ENCODE measurements at regions of chr3 and their contacts with region 1.

Region 1: DNA sequence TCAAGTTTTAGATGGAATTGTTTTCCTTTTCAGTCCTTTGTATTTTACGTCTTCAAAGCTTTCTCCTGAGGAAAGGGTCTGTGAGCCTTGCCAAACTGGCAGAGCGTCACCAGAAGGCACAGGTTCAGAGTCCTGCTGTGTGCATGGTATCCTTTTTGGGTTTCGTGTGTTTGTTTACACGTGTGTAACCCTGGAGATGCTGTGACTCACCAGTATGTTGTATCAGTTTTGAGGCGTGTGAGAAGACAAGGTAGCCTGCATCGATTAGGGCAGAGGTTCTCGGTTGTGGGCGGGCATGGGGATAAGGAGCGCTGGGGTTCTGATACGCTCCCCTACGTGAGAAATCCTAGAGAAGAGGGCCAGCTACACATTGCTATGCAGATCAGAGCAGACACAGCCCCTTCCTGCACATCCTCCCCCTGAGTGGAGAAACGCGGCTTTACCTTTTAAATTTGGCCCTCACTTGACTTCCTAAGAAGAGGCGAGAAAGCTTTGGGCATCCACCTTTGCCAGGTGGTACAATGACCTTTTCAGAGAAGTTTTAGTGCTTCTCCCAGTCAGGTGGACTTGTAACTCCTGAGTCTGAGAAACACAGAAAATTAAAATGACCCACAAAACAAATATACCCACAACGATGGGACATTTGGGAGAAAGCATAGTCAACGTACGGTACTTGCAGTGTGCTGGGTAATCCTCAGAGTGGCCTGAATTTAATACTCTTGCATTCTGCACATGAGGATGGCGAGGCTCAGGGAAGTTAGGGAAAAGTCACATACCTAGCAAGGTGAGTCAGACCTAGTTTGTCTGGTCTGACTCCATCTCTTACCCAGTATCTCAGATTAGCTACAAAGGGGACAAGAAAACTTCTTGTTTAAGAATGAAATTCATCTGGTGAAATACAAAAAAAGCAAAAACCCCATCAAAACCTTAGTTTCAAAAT is 38.1 kb downstream of the TRAK1 start:
- DNase-seq: peak; percentile 84
- H3K4me3 Mint-ChIP-seq: peak overlapping the region; percentile 72
- H3K27ac Mint-ChIP-seq: peak overlapping the region; percentile 100
- H3K4me1 Mint-ChIP-seq: peaks cover 48% of the 10 kb centered on the region
- H3K27me3 Mint-ChIP-seq: no peaks in the 10 kb centered on the region
- CTCF ChIP-seq: no peak

Region 2: DNA sequence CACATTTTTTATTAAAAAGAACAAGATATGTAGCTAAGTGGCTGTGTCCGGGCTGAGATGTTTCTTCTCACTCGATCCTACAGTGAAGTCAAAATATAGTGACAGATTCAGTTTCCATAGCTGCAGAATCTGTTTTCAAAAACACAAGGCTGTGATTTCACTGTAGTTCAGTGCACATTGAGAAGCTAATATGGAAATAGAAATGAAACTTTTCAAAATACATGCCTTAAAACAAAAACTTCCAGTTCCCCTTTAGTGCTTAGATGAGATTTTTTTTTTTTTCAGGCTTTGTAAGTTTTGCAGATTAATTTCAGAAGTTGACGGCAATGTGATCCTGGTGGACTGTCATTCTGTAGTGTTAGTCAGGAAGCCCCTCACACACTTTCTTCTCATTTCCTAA is 62.0 kb before region 1 on chr3:
- CTCF ChIA-PET with region 1: no interaction called
- intact Hi-C with region 1: no loop called
- DNase-seq: no peak
- H3K4me3 Mint-ChIP-seq: no peak overlapping the region
- H3K27ac Mint-ChIP-seq: no peak overlapping the region
- H3K4me1 Mint-ChIP-seq: peaks cover 24% of the 10 kb centered on the region
- H3K27me3 Mint-ChIP-seq: no peaks in the 10 kb centered on the region
- CTCF ChIP-seq: no peak

Region 3: DNA sequence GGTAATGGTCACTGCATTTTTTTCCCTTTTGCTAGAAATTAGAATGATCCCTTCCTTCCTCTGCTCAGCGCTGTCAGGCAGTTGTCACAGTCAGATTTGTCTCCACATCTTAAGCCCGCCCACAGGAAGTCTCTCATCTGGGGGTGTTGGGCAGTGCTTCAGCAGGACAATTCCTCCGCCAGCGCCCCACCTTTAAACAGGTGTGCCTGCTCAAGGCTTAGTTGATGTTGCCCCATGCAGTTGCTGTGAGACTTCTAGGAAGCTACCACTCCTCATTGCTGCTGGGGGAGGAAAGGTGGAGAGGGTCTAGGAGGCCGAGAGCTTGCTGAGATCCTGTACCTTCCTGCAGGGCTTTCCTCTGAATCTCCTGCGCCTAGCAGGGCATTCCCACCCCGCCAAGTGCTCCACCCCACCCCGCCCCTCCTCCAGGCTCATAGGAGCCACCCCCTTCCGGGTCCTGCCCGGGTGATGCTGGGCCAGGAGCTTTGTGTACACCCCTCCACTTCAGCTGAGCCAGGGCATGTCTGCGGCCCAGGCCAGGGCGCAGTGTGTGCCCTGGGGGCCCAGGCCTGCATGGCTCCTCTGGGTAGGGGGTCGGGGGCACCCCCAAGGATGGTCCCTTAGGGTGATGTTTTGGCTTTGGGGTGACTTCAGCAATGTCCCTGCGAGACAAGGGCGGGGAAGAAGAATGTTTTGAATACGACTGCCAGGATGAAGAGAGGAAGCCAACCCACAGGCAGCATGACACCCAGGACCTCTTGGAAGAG is 30.6 kb after region 1 on chr3:
- CTCF ChIA-PET with region 1: interaction called, 9 read pairs
- intact Hi-C with region 1: loop called (anchors 1 kb)
- DNase-seq: peak; percentile 88
- H3K4me3 Mint-ChIP-seq: peak overlapping the region; percentile 97
- H3K27ac Mint-ChIP-seq: peak overlapping the region; percentile 43
- H3K4me1 Mint-ChIP-seq: peaks cover 32% of the 10 kb centered on the region
- H3K27me3 Mint-ChIP-seq: no peaks in the 10 kb centered on the region
- CTCF ChIP-seq: no peak

Region 4: DNA sequence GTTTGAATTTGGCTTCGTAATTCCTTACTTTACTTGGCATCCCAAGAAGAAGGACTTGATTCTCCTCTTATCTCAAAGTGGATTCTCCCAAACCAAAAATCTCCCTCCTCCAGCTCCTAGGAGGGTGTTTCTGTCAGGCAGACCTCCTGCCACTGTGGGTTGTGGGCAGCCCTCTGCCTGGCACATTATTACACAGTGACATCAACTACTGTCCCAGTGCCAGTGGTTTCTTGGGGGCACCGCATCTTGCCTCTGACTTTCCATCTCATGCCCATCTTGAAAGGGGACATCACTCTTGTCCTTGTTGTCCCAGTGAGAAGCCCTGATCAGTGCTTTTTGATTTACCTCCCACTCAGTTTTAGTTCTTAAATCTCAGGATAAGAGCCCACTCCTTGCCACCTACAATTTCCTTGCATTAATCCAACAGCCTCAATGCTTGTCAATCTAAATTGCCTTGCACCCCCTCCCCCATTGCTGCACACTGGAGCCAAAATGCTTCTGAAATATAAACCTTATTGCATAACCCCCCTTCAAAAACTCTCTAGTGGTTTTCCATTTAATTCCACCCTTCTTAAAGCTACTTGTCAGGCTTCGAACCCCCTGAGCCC is 42.9 kb after region 1 on chr3:
- CTCF ChIA-PET with region 1: no interaction called
- intact Hi-C with region 1: no loop called
- DNase-seq: no peak
- H3K4me3 Mint-ChIP-seq: no peak overlapping the region
- H3K27ac Mint-ChIP-seq: no peak overlapping the region
- H3K4me1 Mint-ChIP-seq: peaks cover 32% of the 10 kb centered on the region
- H3K27me3 Mint-ChIP-seq: no peaks in the 10 kb centered on the region
- CTCF ChIP-seq: no peak

Region 5: GRCh38 chr3:42190701-42191462 is 61.6 kb after region 1 on chr3:
- CTCF ChIA-PET with region 1: interaction called, 25 read pairs
- intact Hi-C with region 1: no loop called
- DNase-seq: peak; percentile 85
- H3K4me3 Mint-ChIP-seq: no peak overlapping the region
- H3K27ac Mint-ChIP-seq: peak overlapping the region; percentile 36
- H3K4me1 Mint-ChIP-seq: peaks cover 40% of the 10 kb centered on the region
- H3K27me3 Mint-ChIP-seq: no peaks in the 10 kb centered on the region
- CTCF ChIP-seq: peak; percentile 86